CD8-positive, alpha-beta T cell (primary cell): ENCODE measurements at regions of chr10 and their contacts with region 1.

Region 1: DNA sequence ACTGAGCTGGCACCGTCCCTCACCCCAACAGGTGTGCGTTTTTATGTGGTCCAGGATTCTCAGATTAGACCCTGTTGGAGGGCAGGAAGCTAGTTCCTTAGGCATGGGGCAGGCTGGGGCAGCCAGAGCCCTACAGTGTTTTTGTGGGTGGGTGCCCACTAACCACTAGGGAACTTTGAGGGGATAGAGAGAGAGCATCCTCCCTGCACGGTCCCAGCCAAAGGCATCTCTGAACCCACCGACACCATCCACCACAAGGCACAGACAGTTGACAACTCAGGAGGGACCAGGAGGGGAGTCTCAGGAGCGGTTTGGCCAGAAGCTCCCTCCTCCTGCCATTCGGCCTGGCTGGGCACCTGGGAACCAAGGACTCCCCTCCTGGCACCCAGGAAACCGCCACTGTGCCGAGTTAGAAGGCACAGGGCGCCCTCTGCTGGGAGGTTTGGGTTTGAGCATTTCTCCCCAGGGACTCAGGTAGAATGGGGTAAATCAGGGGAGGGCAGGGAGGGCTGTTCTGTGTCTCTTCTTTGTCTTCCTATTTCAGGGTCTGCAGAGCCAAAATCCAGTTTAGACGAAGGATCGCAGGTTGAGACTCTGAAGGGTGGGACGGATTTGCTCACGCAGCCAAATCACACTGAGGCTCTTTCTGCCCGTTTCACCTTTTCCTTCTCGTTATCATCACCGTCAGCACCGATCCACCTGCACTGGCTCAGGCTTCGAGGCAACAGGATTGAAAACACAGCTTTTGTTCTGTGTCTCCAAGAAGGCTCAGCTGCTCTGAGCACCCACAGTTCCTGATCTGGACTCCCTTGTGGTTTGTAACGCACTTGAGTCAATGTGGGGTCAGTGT is 84.8 kb upstream of the COL13A1 start:
- DNase-seq: peak in 8 of 9 experiments; percentile 9 to 65 (median 53)
- ATAC-seq: no peak
- H3K4me3 ChIP-seq: no peak overlapping the region
- H3K4me3 Mint-ChIP-seq: no peak overlapping the region
- H3K27ac ChIP-seq: no peak overlapping the region
- H3K27ac Mint-ChIP-seq: no peak overlapping the region
- H3K4me1 ChIP-seq: no peaks in the 10 kb centered on the region
- H3K4me1 Mint-ChIP-seq: no peaks in the 10 kb centered on the region
- H3K27me3 ChIP-seq: peaks cover 0 to 5% of the 10 kb centered on the region in 2 experiments
- H3K27me3 Mint-ChIP-seq: peaks cover 20% of the 10 kb centered on the region
- CTCF ChIP-seq: peak; percentile 37

Region 2: DNA sequence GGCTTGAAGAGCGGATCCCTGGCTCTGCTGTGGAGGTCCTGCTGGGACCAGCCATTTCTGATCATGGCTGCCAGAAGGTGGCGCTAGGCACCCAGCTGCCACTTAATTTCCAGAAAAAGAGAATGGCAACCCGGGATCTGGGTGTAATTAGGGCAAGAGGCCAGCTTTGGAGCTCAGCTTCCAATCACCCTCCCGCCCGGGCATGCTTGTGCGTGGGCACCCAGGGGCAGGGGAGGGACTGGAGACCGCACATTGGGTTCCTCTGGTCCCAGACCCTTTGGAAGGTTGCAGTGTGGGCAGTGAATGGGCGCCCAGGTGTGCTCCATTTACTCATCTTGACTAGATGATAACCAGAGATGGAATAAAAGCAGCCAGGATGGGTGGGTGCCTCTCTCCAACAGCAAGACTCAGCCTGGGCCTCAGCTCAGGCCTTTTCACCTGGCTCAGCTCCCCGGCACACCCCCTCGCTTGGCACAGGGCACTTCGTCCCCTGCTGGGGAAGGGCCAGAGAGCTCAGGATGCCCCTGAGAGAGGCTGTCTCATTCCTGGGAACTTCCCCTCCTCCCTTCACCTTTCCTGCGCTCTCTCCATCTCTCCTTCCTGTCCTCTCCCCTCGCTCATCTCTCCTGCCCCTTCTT is 72.2 kb before region 1 on chr10:
- CTCF ChIA-PET with region 1: interaction called, 19 read pairs
- POLR2A ChIA-PET with region 1: no interaction called
- intact Hi-C with region 1: loop called in 1 of 2 experiments (anchors 1 kb)
- DNase-seq: peak in 4 of 9 experiments; percentile 25 to 42 (median 32)
- ATAC-seq: no peak
- H3K4me3 ChIP-seq: no peak overlapping the region
- H3K4me3 Mint-ChIP-seq: no peak overlapping the region
- H3K27ac ChIP-seq: no peak overlapping the region
- H3K27ac Mint-ChIP-seq: no peak overlapping the region
- H3K4me1 ChIP-seq: no peaks in the 10 kb centered on the region
- H3K4me1 Mint-ChIP-seq: no peaks in the 10 kb centered on the region
- H3K27me3 ChIP-seq: peaks cover 0 to 2% of the 10 kb centered on the region in 2 experiments
- H3K27me3 Mint-ChIP-seq: peaks cover 11% of the 10 kb centered on the region
- CTCF ChIP-seq: peak; percentile 48

Region 3: DNA sequence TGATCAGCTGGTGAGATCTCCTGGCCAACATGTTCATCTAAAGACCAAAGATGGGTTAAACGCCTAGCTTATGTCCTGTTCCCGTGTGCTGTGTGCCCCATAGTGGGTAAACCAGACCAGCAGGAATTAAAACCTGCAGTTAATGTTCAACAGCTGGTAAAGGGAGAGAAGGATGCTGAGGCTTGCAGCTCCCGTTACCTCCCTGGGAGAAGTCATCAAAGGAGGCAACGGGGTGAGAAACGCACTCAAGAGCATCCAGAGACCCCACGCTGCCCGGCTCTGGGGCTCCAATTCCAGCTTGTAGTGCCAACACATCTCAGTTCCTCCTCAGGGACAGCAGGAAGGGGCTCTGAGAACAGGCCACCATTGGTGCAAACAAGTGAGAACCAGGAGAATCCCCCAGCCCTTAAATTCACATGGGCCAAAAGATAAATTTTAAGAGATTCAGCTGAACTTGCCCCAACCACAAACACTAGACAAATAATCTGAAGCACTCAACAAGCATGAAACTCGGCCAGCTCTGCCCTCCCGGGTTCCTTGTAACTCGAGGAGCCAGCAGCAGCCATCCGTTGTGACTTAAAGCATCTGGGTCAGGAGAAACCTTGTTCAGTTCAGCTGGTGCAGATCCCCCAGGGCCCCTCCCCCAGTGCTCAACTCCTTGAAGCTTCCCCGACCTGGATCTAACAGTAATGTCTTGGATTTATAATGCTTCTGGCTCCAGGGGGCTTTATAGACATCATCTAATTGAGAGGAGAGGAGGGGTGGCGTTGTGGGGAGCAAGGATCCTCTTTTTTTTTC is 57.5 kb before region 1 on chr10:
- CTCF ChIA-PET with region 1: no interaction called
- POLR2A ChIA-PET with region 1: no interaction called
- intact Hi-C with region 1: no loop called
- DNase-seq: no peak
- ATAC-seq: no peak
- H3K4me3 ChIP-seq: no peak overlapping the region
- H3K4me3 Mint-ChIP-seq: no peak overlapping the region
- H3K27ac ChIP-seq: no peak overlapping the region
- H3K27ac Mint-ChIP-seq: no peak overlapping the region
- H3K4me1 ChIP-seq: no peaks in the 10 kb centered on the region
- H3K4me1 Mint-ChIP-seq: no peaks in the 10 kb centered on the region
- H3K27me3 ChIP-seq: peaks cover 0 to 3% of the 10 kb centered on the region in 2 experiments
- H3K27me3 Mint-ChIP-seq: peaks cover 19% of the 10 kb centered on the region
- CTCF ChIP-seq: no peak